Esophagus squamous epithelium (tissue), 5 donors: ENCODE measurements at regions of chr7 and their contacts with region 1.

Region 1: GRCh38 chr7:135169141-135169960 is 1.2 kb downstream of the CYREN start:
- DNase-seq: no peak
- H3K4me3 ChIP-seq: peak overlapping the region; percentile 72 to 95 (median 82)
- H3K27ac ChIP-seq: peak overlapping the region; percentile 95 to 99 (median 97)
- H3K4me1 ChIP-seq: peaks cover 23 to 74% (median 52%) of the 10 kb centered on the region in 3 donors
- H3K27me3 ChIP-seq: no peaks in the 10 kb centered on the region
- CTCF ChIP-seq: peak in 3 of 6 experiments; percentile 34 to 43 (median 37)
- POLR2A ChIP-seq: peak in 1 of 4 donors; percentile 33

Region 2: GRCh38 chr7:134690016-134690415 is 479.3 kb before region 1 on chr7:
- intact Hi-C with region 1: loop called (anchors 10 kb)
- DNase-seq: no peak
- H3K4me3 ChIP-seq: peak overlapping the region in 3 of 4 donors; percentile 13 to 24 (median 19)
- H3K27ac ChIP-seq: peak overlapping the region; percentile 32 to 78 (median 74)
- H3K4me1 ChIP-seq: peaks cover 0 to 24% (median 19%) of the 10 kb centered on the region in 3 donors
- H3K27me3 ChIP-seq: no peaks in the 10 kb centered on the region
- CTCF ChIP-seq: peak in 4 of 6 experiments; percentile 29 to 48 (median 45)
- POLR2A ChIP-seq: no peak

Region 3: GRCh38 chr7:134986363-134987251 is 182.7 kb before region 1 on chr7 and contains the start of gene AGBL3:
- intact Hi-C with region 1: loop called (anchors 10 kb)
- DNase-seq: peak; percentile 66
- H3K4me3 ChIP-seq: peak within 1 kb of the TSS; percentile 74 to 83 (median 78)
- H3K27ac ChIP-seq: peak within 1 kb of the TSS; percentile 81 to 93 (median 88)
- H3K4me1 ChIP-seq: peaks cover 3 to 47% (median 4%) of the 10 kb centered on the region in 3 donors
- H3K27me3 ChIP-seq: no peaks in the 10 kb centered on the region
- CTCF ChIP-seq: peak; percentile 51 to 68 (median 60)
- POLR2A ChIP-seq: peak in 2 of 4 donors; percentile 38 to 55
- total RNA-seq, gene AGBL3: 0.35 to 3.6 (median 0.55) TPM

Region 4: GRCh38 chr7:135385209-135385608 is 215.9 kb after region 1 on chr7:
- intact Hi-C with region 1: no loop called
- DNase-seq: no peak
- H3K4me3 ChIP-seq: no peak overlapping the region
- H3K27ac ChIP-seq: no peak overlapping the region
- H3K4me1 ChIP-seq: no peaks in the 10 kb centered on the region
- H3K27me3 ChIP-seq: no peaks in the 10 kb centered on the region
- CTCF ChIP-seq: no peak
- POLR2A ChIP-seq: no peak